ENCODE measurements at regions of chr14 and their contacts with region 1.

Region 1: DNA sequence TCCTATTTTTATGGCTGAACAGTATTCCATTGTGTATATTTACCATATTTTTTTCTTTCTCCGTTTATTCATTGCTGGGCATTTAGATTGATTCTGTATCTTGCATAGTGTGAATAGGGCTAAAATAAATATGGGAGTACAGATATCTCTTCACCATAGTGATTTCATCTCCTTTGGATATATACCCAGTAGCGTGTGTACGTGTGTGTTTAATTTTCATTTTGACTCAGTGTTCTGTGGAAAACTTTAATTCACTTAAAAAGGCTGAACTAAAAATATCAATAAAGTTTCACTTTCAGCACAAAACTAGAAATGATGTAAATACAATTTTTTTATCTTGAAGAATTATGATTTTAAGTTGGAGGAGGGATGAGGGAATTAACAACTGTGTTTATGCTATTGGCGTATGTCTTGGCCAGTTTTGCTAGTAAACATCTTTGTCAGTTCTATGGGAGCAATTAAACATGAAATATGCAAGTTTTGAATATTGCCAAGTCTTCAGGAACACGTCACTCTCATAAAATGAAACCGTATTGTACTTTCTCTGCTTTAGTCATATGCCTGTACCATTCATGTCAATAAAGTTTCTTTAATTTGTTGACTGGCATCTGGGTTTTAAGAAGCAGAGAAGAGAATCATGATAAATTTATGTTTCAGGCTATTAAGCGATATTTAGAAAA is 99.8 kb downstream of the PTGER2 start:
- DNase-seq: peak; percentile 85
- ATAC-seq: peak; percentile 94
- H3K4me3 ChIP-seq: peak overlapping the region; percentile 29; the same call in 1 of the 2 replicates
- H3K27ac ChIP-seq: peak overlapping the region; percentile 10; the same call in 1 of the 2 replicates
- H3K4me1 ChIP-seq: peaks cover 9% of the 10 kb centered on the region
- H3K27me3 ChIP-seq: no peaks in the 10 kb centered on the region
- CTCF ChIP-seq: no peak

Region 2: GRCh38 chr14:52399921-52400611 is 13.8 kb before region 1 on chr14:
- CTCF ChIA-PET with region 1: no interaction called
- POLR2A ChIA-PET with region 1: no interaction called
- intact Hi-C with region 1: no loop called
- DNase-seq: peak; percentile 40
- ATAC-seq: peak; percentile 46
- H3K4me3 ChIP-seq: no peak overlapping the region
- H3K27ac ChIP-seq: no peak overlapping the region
- H3K4me1 ChIP-seq: peaks cover 17% of the 10 kb centered on the region
- H3K27me3 ChIP-seq: no peaks in the 10 kb centered on the region
- CTCF ChIP-seq: peak; percentile 36; the same call in 1 of the 2 replicates

Region 3: DNA sequence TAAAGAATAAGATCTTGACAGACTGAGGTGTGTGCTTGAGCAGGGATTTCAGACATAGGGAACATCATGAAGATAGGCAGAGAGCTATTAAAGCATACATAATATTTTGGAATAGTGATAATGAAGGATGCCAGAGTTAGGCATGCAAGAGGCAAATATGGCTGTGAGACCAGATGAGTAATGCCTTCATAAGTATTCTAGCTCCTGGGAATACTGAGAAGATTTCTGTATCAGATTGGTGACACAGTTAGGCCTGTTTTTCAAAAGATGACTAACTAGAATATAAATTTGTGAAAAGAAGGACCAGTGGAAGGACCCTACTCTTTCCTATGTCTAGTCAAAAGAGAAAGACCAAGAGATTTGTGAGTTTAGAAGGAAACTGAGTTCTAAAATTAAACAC is 29.6 kb after region 1 on chr14:
- CTCF ChIA-PET with region 1: no interaction called
- POLR2A ChIA-PET with region 1: no interaction called
- intact Hi-C with region 1: no loop called
- DNase-seq: no peak
- ATAC-seq: no peak
- H3K4me3 ChIP-seq: no peak overlapping the region
- H3K27ac ChIP-seq: no peak overlapping the region
- H3K4me1 ChIP-seq: no peaks in the 10 kb centered on the region
- H3K27me3 ChIP-seq: no peaks in the 10 kb centered on the region
- CTCF ChIP-seq: no peak

Region 4: GRCh38 chr14:52455291-52456088 is 41.6 kb after region 1 on chr14:
- CTCF ChIA-PET with region 1: no interaction called
- POLR2A ChIA-PET with region 1: no interaction called
- intact Hi-C with region 1: loop called (anchors 5 kb)
- DNase-seq: peak; percentile 70
- ATAC-seq: no peak
- H3K4me3 ChIP-seq: no peak overlapping the region
- H3K27ac ChIP-seq: peak overlapping the region; percentile 4; the same call in 1 of the 2 replicates
- H3K4me1 ChIP-seq: peaks cover 40% of the 10 kb centered on the region
- H3K27me3 ChIP-seq: no peaks in the 10 kb centered on the region
- CTCF ChIP-seq: no peak

Measured in PC-3 (cell line).